BJ (cell line): ENCODE measurements at regions of chr9 and their contacts with region 1.

Region 1: GRCh38 chr9:97598461-97599288 is 34.5 kb downstream of the TSTD2 start:
- DNase-seq: peak; percentile 20
- H3K4me3 ChIP-seq: no peak overlapping the region
- H3K27me3 ChIP-seq: no peaks in the 10 kb centered on the region
- CTCF ChIP-seq: peak; percentile 92

Region 2: GRCh38 chr9:97220894-97221477 is 377.7 kb before region 1 on chr9:
- CTCF ChIA-PET with region 1: no interaction called
- POLR2A ChIA-PET with region 1: interaction called, 19 read pairs
- DNase-seq: no peak
- H3K4me3 ChIP-seq: no peak overlapping the region
- H3K27me3 ChIP-seq: peaks cover 9% of the 10 kb centered on the region
- CTCF ChIP-seq: no peak

Region 3: DNA sequence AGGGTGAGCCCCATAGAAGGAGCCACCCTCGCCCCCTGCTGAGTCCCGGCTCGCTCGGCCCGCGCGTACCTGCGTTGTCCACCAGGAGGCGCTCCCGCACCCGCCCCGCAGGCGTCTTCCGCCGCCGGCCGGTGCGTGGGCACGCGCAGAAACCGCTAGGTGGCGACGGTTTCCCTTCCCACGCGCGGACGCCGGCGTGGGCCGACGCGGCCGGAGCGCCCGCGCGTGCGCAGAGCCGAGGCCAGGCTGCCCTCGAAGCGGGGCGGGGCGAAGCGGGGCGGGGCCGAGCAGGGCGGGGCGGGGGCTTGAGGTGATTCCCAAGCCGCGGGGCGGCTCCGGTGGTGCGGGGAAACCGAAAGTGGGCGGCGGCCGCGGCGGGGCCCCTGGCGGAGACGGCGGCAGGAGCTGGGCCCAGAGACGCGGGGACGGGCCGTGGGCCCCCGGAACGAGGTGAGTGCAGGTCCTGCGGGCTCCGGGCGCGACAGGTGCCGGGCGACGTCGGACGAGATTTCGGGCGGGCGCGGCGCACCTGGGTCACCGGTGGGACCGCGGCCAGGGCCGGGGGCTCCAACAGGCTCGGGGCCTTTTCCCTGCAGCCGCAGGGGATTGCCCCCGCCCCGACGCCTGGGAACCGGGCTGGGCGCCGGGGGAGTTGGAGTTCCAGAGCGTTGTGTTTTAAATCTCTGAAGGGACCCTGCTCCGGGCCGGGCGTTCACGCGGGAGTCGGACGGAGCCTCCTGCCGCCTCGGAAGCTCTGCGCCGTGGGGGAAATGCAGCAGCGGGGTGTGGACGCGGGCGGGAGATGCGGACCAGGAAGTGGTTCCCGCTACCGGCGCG is 186.7 kb before region 1 on chr9 and contains the start of gene TDRD7:
- CTCF ChIA-PET with region 1: interaction called, 17 read pairs
- POLR2A ChIA-PET with region 1: no interaction called
- DNase-seq: no peak
- H3K4me3 ChIP-seq: peak within 1 kb of the TSS; percentile 88
- H3K27me3 ChIP-seq: peaks cover 11% of the 10 kb centered on the region
- CTCF ChIP-seq: peak; percentile 89
- polyA plus RNA-seq, gene TDRD7: 5.4 and 9.4 TPM in 2 replicates

Region 4: DNA sequence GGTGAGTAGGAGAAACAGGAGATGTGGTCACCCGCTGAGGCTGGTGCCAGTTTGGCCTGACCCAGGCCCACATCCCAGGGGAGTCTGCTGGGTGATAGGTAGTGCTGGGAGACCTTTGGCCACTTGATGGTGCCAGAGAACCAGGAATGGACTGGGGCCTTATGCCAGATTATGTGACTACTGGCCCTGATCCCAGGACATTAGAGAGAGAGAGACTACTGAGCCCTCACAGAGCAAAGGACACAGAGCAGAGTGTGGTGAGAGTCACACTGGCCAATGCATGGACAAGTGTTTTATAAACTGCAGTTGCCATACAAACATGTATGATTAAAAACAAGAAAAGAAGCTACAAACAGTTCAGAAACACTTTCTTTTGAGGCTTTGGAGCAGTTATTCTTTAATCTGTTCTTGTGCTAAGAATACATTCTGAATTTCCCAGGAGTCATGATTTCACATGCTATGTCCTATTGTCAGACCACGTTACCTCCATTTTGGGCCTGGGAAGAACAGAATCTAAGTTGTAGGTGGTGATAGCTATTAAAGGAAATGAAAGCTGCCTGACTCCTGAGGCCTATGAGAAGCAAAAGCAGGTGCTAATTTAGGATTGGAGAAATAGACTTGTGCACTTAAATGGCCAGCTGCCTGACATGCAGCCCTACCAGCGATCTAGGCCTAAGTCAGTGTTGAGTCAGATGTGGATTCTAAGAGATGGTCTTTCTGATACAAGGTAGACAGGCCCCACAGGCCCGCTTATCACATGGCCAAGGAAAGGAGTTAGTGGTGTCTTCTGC is 129.8 kb before region 1 on chr9:
- CTCF ChIA-PET with region 1: interaction called, 292 read pairs
- POLR2A ChIA-PET with region 1: no interaction called
- DNase-seq: no peak
- H3K4me3 ChIP-seq: no peak overlapping the region
- H3K27me3 ChIP-seq: no peaks in the 10 kb centered on the region
- CTCF ChIP-seq: peak; percentile 84

Region 5: DNA sequence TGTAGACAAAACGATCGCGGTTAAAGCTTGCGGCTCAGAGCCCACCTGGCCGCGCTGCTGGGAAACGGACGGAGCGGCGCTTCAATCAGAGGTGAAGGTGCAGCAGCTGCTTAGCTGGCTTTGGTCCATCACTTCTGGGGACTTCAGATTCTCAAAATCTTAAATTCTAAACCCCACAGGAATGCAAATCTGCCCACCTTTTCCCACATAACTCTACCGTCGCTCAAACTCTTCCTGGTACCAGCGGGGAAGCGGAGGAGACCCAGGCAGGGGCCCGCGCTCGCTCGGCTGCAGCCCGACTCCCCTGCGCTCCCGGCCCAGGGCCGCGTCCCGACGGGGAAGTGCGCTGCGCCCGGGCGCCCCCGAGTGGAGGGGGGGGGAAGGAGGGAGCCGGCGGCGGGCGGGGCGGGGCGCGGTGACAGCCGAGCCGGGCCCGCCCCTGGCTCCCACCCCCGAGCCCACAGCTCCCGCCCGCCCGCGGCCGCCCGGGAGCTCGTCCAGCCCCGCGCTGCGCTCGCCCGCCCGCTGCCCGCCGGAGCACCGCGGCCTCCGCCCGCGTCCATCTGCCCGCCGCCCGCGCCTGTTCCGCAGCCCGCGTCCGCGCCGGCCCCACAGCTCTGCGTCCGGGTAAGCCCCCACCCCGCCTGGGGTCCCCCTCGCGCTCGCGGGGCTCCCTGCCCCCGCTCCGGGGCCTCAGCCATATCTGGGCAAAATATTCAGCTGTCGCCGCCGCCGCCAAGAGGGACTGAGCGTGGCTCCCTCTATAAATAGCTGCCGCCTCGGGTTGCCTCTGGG is 97.3 kb before region 1 on chr9 and contains the start of gene TMOD1:
- CTCF ChIA-PET with region 1: interaction called, 20 read pairs
- POLR2A ChIA-PET with region 1: no interaction called
- DNase-seq: no peak
- H3K4me3 ChIP-seq: peak within 1 kb of the TSS; percentile 42
- H3K27me3 ChIP-seq: peaks cover 41% of the 10 kb centered on the region
- CTCF ChIP-seq: no peak
- polyA plus RNA-seq, gene TMOD1: 0.06 and 0.15 TPM in 2 replicates

Region 6: GRCh38 chr9:98074115-98074990 is 475.7 kb after region 1 on chr9:
- CTCF ChIA-PET with region 1: no interaction called
- POLR2A ChIA-PET with region 1: no interaction called
- DNase-seq: no peak
- H3K4me3 ChIP-seq: no peak overlapping the region
- H3K27me3 ChIP-seq: no peaks in the 10 kb centered on the region
- CTCF ChIP-seq: peak; percentile 93